Activated naive CD4-positive, alpha-beta T cell treated with anti-CD3 and anti-CD28 coated beads for 36 hours (primary cell): ENCODE measurements at regions of chr17 and their contacts with region 1.

Region 1: GRCh38 chr17:29568331-29569244 is at the start of gene TP53I13:
- DNase-seq: peak; percentile 91
- H3K4me3 Mint-ChIP-seq: peak within 1 kb of the TSS; percentile 94
- H3K27ac Mint-ChIP-seq: peak within 1 kb of the TSS; percentile 88
- H3K4me1 Mint-ChIP-seq: peaks cover 12% of the 10 kb centered on the region
- H3K27me3 Mint-ChIP-seq: no peaks in the 10 kb centered on the region
- total RNA-seq, gene TP53I13: 30.9 to 37.2 TPM

Region 2: GRCh38 chr17:29140051-29140621 is 428.5 kb before region 1 on chr17:
- CTCF ChIA-PET with region 1: no interaction called
- intact Hi-C with region 1: loop called (anchors 5 kb)
- DNase-seq: peak; percentile 89
- H3K4me3 Mint-ChIP-seq: peak overlapping the region; percentile 83
- H3K27ac Mint-ChIP-seq: peak overlapping the region; percentile 93
- H3K4me1 Mint-ChIP-seq: peaks cover 66% of the 10 kb centered on the region
- H3K27me3 Mint-ChIP-seq: no peaks in the 10 kb centered on the region

Region 3: DNA sequence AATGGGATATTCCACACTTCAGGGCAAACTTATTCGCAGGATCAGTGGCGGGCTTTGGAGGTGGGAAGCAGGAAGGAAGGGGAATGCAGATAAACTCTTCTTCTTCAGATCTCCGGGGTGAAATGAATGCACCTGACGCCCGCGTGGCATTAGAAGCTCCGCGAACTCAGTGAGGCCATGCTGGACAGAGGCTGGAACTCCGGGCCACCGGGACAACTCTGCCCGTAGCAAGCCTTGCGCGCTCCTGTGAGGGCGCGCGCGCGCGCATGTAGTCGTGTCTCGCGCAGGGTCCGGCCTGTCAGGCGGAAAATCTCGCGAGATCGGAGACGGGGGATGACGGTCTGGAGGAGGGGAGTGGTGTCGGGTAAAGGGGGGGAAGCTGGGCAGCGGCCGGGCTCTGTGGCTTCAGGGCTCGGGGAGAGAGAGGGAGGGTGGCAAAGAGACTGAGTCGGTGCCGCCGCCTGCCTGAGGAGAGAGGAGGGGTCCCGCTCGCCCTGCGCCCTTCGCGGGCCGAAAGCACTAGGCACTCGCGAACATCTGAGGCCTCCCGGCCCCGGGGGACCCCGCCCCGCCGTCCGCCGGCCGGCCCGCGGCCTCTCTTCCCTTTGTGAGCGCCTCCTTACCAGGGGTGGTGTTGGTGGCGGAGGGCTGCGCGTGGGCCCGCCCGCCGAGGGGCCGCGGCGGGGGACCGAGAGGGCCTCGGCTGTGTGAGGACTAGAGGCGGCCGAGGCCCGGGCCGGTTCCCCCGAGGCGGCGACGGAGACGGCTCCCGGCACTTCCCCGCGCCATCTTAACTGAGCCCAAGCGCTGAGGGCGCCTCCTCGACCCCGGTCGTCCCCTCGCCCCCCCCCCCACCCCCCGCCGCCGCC is 178.4 kb before region 1 on chr17 and contains the start of gene TAOK1:
- CTCF ChIA-PET with region 1: no interaction called
- intact Hi-C with region 1: loop called (anchors 1 kb)
- DNase-seq: peak; percentile 99
- H3K4me3 Mint-ChIP-seq: peak within 1 kb of the TSS; percentile 94
- H3K27ac Mint-ChIP-seq: peak within 1 kb of the TSS; percentile 88
- H3K4me1 Mint-ChIP-seq: peaks cover 44% of the 10 kb centered on the region
- H3K27me3 Mint-ChIP-seq: no peaks in the 10 kb centered on the region
- total RNA-seq, gene TAOK1: 21.8 to 21.9 TPM

Region 4: GRCh38 chr17:29579866-29580771 is 11.5 kb after region 1 on chr17:
- CTCF ChIA-PET with region 1: interaction called, 11 read pairs
- intact Hi-C with region 1: no loop called
- DNase-seq: peak; percentile 96
- H3K4me3 Mint-ChIP-seq: no peak overlapping the region
- H3K27ac Mint-ChIP-seq: peak overlapping the region; percentile 77
- H3K4me1 Mint-ChIP-seq: peaks cover 24% of the 10 kb centered on the region
- H3K27me3 Mint-ChIP-seq: no peaks in the 10 kb centered on the region

Region 5: GRCh38 chr17:29589524-29590410 is 21.2 kb after region 1 on chr17 and contains the start of gene GIT1:
- CTCF ChIA-PET with region 1: interaction called, 16 read pairs
- intact Hi-C with region 1: loop called (anchors 1 kb)
- DNase-seq: peak; percentile 84
- H3K4me3 Mint-ChIP-seq: peak within 1 kb of the TSS; percentile 93
- H3K27ac Mint-ChIP-seq: peak within 1 kb of the TSS; percentile 88
- H3K4me1 Mint-ChIP-seq: peaks cover 70% of the 10 kb centered on the region
- H3K27me3 Mint-ChIP-seq: no peaks in the 10 kb centered on the region
- total RNA-seq, gene GIT1: 35.5 to 37.5 TPM